ENCODE measurements at regions of chr6 and their contacts with region 1.

Region 1: DNA sequence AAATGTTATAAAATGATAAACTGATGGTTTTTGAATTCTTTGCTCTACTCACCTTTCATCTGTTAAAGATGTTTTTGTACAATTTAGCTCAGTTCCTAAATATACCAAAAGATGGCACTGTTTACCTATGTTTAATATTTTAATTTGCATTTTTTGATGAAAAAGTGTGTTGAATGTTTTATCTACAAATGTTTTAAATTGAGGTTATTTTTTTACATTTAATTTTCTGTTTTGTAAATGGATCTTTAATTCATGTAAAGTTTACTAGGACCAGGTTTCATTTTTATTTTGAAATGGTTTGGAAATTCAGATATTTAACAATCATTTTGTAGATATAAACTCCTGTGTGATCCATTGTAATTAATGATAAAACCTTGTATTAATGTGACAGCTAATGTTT is 30.0 kb downstream of the CDKAL1 start:
- DNase-seq: peak; percentile 33
- H3K4me3 ChIP-seq: no peak overlapping the region
- H3K27ac ChIP-seq: no peak overlapping the region
- H3K4me1 ChIP-seq: no peaks in the 10 kb centered on the region
- H3K27me3 ChIP-seq: no peaks in the 10 kb centered on the region

Region 2: GRCh38 chr6:21589352-21590345 is 1025.4 kb after region 1 on chr6:
- in situ Hi-C with region 1: loop called (anchors 10 kb)
- DNase-seq: peak; percentile 91
- H3K4me3 ChIP-seq: peak overlapping the region; percentile 99
- H3K27ac ChIP-seq: peak overlapping the region; percentile 47; the same call in 1 of the 2 replicates
- H3K4me1 ChIP-seq: 0 out of 2 replicates have a peak, but pooled peaks cover 4% of the 10 kb centered on the region
- H3K27me3 ChIP-seq: no peaks in the 10 kb centered on the region

Region 3: DNA sequence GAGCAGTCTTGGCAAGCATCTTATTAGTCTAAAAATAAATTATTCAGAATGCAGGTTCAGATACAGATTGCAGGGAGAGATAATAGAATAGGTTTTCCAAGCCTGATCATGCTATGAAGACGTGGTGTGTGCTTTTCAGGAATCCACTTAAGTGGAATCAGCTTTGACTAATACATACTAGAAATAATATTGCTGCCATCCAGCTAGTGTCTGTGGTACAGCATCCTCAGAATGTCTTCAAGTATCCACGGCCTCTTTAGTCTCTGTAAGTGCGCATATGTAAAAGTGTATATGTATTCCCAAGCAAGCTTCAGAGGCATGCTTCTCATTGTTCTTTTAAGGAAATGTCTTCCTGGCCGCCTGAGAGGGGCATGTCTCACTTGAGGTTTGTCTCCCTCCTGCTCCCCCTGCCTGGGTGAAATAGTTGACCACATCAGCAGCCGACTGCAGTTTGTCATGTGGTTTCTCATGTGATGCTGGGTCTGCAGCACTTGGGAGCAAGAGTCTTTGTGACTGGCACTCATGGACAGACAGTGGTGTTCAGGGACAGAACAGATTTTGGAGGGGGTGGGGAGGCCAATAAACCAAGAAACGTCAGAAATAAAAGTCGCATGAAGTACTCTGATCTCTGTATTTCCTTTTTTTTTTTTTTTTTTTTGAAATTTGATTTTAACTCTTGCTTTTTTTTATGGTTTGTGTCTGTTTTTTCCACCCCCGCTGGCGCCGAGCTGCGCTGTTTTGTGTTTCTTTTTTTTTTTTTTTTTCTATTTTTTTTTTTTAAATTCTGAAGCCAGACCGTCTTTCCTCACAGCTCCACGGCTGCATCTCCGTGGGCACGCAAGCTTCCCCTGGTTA is 1581.8 kb after region 1 on chr6:
- in situ Hi-C with region 1: loop called (anchors 25 kb)
- DNase-seq: peak; percentile 73
- H3K4me3 ChIP-seq: peak overlapping the region; percentile 69
- H3K27ac ChIP-seq: no peak overlapping the region
- H3K4me1 ChIP-seq: peaks cover 23% of the 10 kb centered on the region
- H3K27me3 ChIP-seq: 0 out of 2 replicates have a peak, but pooled peaks cover 10% of the 10 kb centered on the region